Mammary epithelial cell (primary cell): ENCODE measurements at regions of chr6 and their contacts with region 1.

Region 1: GRCh38 chr6:28648035-28648877 is 122.6 kb downstream of the GPX5 start:
- DNase-seq: peak; percentile 71
- H3K4me3 ChIP-seq: peak overlapping the region; percentile 63 to 81 (median 69)
- H3K27ac ChIP-seq: no peak overlapping the region
- H3K4me1 ChIP-seq: peaks cover 6% of the 10 kb centered on the region
- H3K27me3 ChIP-seq: no peaks in the 10 kb centered on the region
- CTCF ChIP-seq: no peak

Region 2: GRCh38 chr6:27260369-27260768 is 1387.9 kb before region 1 on chr6:
- CTCF ChIA-PET with region 1: no interaction called
- dilution Hi-C with region 1: no loop called
- in situ Hi-C with region 1: no loop called
- intact Hi-C with region 1: loop called (anchors 10 kb)
- DNase-seq: no peak
- H3K4me3 ChIP-seq: no peak overlapping the region
- H3K27ac ChIP-seq: no peak overlapping the region
- H3K4me1 ChIP-seq: no peaks in the 10 kb centered on the region
- H3K27me3 ChIP-seq: no peaks in the 10 kb centered on the region
- CTCF ChIP-seq: no peak

Region 3: DNA sequence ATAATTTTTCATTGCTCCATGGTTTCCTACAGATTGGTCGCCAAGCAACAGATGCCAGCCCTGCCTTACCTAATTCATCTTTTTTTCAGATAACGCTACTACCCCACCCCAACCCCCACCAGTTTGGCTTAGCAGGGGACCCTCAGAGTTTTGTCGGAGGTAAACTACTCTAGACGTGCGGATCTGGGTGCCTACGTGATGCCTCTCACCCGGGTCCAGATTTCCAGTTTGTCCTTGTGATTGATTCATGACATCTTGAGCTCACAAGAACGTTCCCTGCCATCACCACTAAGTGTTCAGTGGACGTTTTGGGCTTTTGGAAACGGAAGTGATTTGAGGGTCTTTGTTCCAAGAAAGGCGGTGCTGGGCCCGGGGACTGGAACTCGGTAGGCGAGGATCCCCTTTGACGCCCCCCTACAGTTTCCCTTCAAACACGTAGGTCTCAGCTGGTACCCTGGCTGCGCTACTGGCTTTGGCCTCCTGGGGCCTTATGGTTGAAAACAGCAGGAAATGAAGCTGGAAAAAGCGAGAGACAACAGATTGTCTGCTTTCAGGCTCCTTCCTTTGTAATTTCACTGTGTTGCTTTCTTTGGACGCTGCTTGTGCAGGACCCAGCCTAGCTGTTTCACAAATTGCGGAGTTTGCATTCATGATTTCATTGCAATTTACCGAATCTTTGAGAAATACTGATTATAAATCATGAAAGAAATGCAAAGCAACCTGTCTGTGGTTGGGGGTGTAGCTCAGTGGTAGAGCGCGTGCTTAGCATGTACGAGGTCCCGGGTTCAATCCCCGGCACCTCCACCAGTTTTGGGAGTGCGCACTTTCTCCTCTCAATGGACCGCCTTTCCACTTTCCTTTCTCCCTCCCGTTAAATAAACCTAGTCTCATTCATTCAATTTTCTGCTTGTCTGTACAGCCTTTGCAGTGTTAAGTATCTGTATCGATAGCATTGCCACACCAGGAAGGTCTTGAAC is 41.5 kb before region 1 on chr6:
- CTCF ChIA-PET with region 1: no interaction called
- dilution Hi-C with region 1: no loop called
- in situ Hi-C with region 1: no loop called
- intact Hi-C with region 1: loop called (anchors 2 kb)
- DNase-seq: peak; percentile 75
- H3K4me3 ChIP-seq: peak overlapping the region; percentile 47 to 68 (median 51)
- H3K27ac ChIP-seq: no peak overlapping the region
- H3K4me1 ChIP-seq: peaks cover 2% of the 10 kb centered on the region
- H3K27me3 ChIP-seq: no peaks in the 10 kb centered on the region
- CTCF ChIP-seq: peak; percentile 42 to 43

Region 4: GRCh38 chr6:28710466-28711191 is 62.4 kb after region 1 on chr6:
- CTCF ChIA-PET with region 1: no interaction called
- dilution Hi-C with region 1: no loop called
- in situ Hi-C with region 1: no loop called
- intact Hi-C with region 1: no loop called
- DNase-seq: peak; percentile 67
- H3K4me3 ChIP-seq: no peak overlapping the region
- H3K27ac ChIP-seq: no peak overlapping the region
- H3K4me1 ChIP-seq: peaks cover 4% of the 10 kb centered on the region
- H3K27me3 ChIP-seq: no peaks in the 10 kb centered on the region
- CTCF ChIP-seq: no peak

Region 5: DNA sequence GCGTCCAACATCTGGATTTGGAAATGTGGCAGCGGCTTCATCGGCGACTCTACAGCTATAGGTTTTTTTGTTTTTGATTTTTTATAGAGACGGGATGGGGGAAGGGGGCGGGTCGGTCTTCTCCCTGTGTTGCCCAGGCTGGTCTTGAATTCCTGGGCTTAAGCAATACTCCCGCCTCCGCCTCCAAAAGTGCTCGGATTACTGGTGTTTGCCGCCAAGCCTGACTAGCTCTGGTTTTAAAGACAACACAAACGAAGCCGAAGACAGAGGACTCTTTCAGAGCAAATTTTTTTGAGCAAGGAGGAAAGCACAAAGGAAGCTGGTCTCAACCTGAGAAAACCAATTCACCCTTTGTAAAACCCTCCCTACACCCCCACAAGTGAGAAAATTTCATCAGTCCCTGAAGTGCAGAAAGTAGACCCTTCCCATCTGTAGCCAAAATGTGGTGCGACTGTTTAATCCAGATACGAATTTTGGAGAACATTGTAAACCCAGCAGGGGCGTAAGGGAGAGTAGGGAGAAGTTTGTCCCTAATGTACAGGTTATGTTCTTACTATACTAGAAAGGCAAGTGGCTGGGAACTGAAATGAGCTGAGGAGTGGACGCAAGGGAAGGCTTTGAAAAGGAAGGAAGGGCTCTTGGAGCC is 89.6 kb after region 1 on chr6:
- CTCF ChIA-PET with region 1: no interaction called
- dilution Hi-C with region 1: no loop called
- in situ Hi-C with region 1: no loop called
- intact Hi-C with region 1: no loop called
- DNase-seq: peak; percentile 53
- H3K4me3 ChIP-seq: peak overlapping the region in 1 of 3 experiments; percentile 14
- H3K27ac ChIP-seq: no peak overlapping the region
- H3K4me1 ChIP-seq: peaks cover 13% of the 10 kb centered on the region
- H3K27me3 ChIP-seq: no peaks in the 10 kb centered on the region
- CTCF ChIP-seq: no peak